Calu3 (cell line): ENCODE measurements at regions of chr9 and their contacts with region 1.

Region 1: GRCh38 chr9:85114799-85115198 is 445.3 kb downstream of the NTRK2 start:
- DNase-seq: no peak
- H3K4me3 Mint-ChIP-seq: no peak overlapping the region
- H3K27ac Mint-ChIP-seq: no peak overlapping the region
- H3K4me1 Mint-ChIP-seq: no peaks in the 10 kb centered on the region
- H3K27me3 Mint-ChIP-seq: no peaks in the 10 kb centered on the region
- CTCF ChIP-seq: no peak

Region 2: GRCh38 chr9:85079349-85079748 is 35.5 kb before region 1 on chr9:
- CTCF ChIA-PET with region 1: no interaction called
- intact Hi-C with region 1: loop called (anchors 2 kb)
- DNase-seq: no peak
- H3K4me3 Mint-ChIP-seq: no peak overlapping the region
- H3K27ac Mint-ChIP-seq: no peak overlapping the region
- H3K4me1 Mint-ChIP-seq: no peaks in the 10 kb centered on the region
- H3K27me3 Mint-ChIP-seq: no peaks in the 10 kb centered on the region
- CTCF ChIP-seq: no peak

Region 3: DNA sequence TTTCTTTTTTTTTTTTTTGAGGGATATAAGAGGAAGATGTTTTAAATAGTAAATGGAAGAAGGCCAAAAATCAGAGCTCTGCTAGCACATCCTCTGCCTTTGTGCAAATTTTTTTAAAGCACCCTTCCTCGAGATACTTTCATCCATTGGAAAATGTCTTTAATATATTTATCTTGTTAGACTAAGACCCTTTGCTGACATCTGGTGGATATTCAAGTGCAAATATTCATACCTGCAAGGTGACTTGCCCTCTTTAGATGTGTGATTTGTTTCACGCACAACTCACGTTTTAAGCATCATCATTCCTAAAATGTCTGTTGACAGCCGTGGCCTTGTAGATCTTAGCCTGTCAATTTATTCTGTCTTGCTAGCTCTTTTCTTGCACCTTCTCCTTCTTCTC is 368.4 kb after region 1 on chr9:
- CTCF ChIA-PET with region 1: no interaction called
- intact Hi-C with region 1: loop called (anchors 10 kb)
- DNase-seq: no peak
- H3K4me3 Mint-ChIP-seq: no peak overlapping the region
- H3K27ac Mint-ChIP-seq: no peak overlapping the region
- H3K4me1 Mint-ChIP-seq: no peaks in the 10 kb centered on the region
- H3K27me3 Mint-ChIP-seq: peaks cover 49% of the 10 kb centered on the region
- CTCF ChIP-seq: no peak